HCT116 (cell line): ENCODE measurements at regions of chr9 and their contacts with region 1.

Region 1: GRCh38 chr9:3732077-3733038 is 206.6 kb upstream of the RFX3 start:
- DNase-seq: peak; percentile 73
- ATAC-seq: peak; percentile 99
- H3K4me3 ChIP-seq: no peak overlapping the region
- H3K27ac ChIP-seq: no peak overlapping the region
- H3K4me1 ChIP-seq: peaks cover 0 to 7% of the 10 kb centered on the region in 2 experiments; a peak in 2 of 4 replicates
- H3K27me3 ChIP-seq: no peaks in the 10 kb centered on the region
- CTCF ChIP-seq: peak; percentile 68 to 85 (median 78)
- POLR2A ChIP-seq: no peak
- RAD21 ChIP-seq: peak; percentile 92

Region 2: GRCh38 chr9:3549225-3549624 is 183.1 kb before region 1 on chr9:
- CTCF ChIA-PET with region 1: no interaction called
- POLR2A ChIA-PET with region 1: no interaction called
- RAD21 ChIA-PET with region 1: no interaction called
- intact Hi-C with region 1: no loop called
- DNase-seq: no peak
- ATAC-seq: no peak
- H3K4me3 ChIP-seq: no peak overlapping the region
- H3K27ac ChIP-seq: no peak overlapping the region
- H3K4me1 ChIP-seq: no peaks in the 10 kb centered on the region
- H3K27me3 ChIP-seq: no peaks in the 10 kb centered on the region
- CTCF ChIP-seq: no peak
- POLR2A ChIP-seq: no peak
- RAD21 ChIP-seq: no peak

Region 3: DNA sequence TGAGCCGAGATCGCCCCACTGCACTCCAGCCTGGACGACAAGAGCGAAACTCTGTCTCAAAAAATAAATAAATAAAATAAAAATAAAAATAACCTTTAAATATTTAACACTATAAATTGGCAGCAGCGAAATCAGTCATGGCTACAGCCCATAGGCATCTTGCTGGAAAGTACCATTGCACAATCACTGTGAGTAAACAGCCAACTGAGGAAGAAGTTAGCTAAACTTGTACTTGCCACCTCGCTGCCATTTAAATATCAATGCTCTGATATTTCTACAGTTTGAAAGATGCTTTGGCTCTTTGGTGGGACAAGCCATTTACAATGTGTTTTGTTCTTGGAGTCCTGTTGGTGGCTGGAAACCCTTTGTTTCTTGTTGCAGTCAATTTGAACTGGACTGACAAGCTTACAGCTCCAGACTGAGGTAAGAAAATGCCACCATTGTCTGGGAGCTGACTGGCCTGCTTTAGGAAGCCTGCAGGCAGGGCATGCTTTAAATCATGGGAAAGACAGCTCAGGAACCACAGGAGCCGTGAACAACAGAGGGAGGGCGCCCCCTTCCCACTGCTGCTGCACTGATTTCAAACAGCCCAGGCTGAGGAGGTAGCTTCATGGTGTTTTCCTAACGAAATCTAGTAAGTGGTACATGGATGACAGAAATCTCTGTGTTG is 116.2 kb after region 1 on chr9:
- CTCF ChIA-PET with region 1: interaction called, 5 read pairs
- POLR2A ChIA-PET with region 1: no interaction called
- RAD21 ChIA-PET with region 1: interaction called, 3 to 6 read pairs
- intact Hi-C with region 1: loop called (anchors 1 kb)
- DNase-seq: no peak
- ATAC-seq: peak; percentile 93
- H3K4me3 ChIP-seq: no peak overlapping the region
- H3K27ac ChIP-seq: no peak overlapping the region
- H3K4me1 ChIP-seq: peaks cover 0 to 10% of the 10 kb centered on the region in 2 experiments; a peak in 1 of 4 replicates
- H3K27me3 ChIP-seq: no peaks in the 10 kb centered on the region
- CTCF ChIP-seq: peak; percentile 35 to 45 (median 43); a peak in 4 of 6 replicates
- POLR2A ChIP-seq: no peak
- RAD21 ChIP-seq: peak; percentile 77

Region 4: DNA sequence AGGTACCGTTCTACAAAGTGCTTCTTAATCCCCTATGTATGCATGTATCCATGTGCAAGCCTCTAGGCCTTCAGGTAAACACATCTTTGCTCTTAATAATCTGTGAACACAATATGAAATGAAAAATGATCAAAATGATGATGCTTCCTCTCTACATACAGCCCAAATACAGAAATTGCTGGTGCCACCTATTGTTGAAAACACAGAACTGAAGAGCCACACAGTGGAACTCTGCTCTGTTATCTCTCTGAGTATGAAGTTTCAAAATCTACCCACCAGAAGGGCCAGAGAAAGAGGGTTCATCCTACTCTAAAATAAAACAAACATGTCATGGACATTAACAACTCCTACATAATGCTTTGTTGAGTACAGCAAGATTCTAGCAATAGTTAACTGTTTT is 496.2 kb after region 1 on chr9:
- CTCF ChIA-PET with region 1: interaction called, 11 read pairs
- POLR2A ChIA-PET with region 1: no interaction called
- RAD21 ChIA-PET with region 1: no interaction called
- intact Hi-C with region 1: loop called (anchors 2 kb)
- DNase-seq: no peak
- ATAC-seq: peak; percentile 77
- H3K4me3 ChIP-seq: no peak overlapping the region
- H3K27ac ChIP-seq: no peak overlapping the region
- H3K4me1 ChIP-seq: peaks cover 0 to 39% of the 10 kb centered on the region in 2 experiments; a peak in 2 of 4 replicates
- H3K27me3 ChIP-seq: no peaks in the 10 kb centered on the region
- CTCF ChIP-seq: peak; percentile 40 to 64 (median 50); a peak in 5 of 6 replicates
- POLR2A ChIP-seq: no peak
- RAD21 ChIP-seq: peak; percentile 62

Region 5: GRCh38 chr9:4339357-4339756 is 607.0 kb after region 1 on chr9:
- CTCF ChIA-PET with region 1: interaction called, 12 read pairs
- POLR2A ChIA-PET with region 1: no interaction called
- RAD21 ChIA-PET with region 1: no interaction called
- intact Hi-C with region 1: loop called (anchors 1 kb)
- DNase-seq: peak; percentile 81
- ATAC-seq: peak; percentile 92
- H3K4me3 ChIP-seq: peak overlapping the region in 1 of 2 experiments; percentile 12; a peak in 1 of 4 replicates
- H3K27ac ChIP-seq: 0 out of 2 replicates have a peak overlapping the region, but pooled peaks have one; percentile 25
- H3K4me1 ChIP-seq: peaks cover 0 to 14% of the 10 kb centered on the region in 2 experiments; a peak in 3 of 4 replicates
- H3K27me3 ChIP-seq: no peaks in the 10 kb centered on the region
- CTCF ChIP-seq: peak; percentile 83 to 99 (median 96)
- POLR2A ChIP-seq: no peak
- RAD21 ChIP-seq: peak; percentile 87

Region 6: DNA sequence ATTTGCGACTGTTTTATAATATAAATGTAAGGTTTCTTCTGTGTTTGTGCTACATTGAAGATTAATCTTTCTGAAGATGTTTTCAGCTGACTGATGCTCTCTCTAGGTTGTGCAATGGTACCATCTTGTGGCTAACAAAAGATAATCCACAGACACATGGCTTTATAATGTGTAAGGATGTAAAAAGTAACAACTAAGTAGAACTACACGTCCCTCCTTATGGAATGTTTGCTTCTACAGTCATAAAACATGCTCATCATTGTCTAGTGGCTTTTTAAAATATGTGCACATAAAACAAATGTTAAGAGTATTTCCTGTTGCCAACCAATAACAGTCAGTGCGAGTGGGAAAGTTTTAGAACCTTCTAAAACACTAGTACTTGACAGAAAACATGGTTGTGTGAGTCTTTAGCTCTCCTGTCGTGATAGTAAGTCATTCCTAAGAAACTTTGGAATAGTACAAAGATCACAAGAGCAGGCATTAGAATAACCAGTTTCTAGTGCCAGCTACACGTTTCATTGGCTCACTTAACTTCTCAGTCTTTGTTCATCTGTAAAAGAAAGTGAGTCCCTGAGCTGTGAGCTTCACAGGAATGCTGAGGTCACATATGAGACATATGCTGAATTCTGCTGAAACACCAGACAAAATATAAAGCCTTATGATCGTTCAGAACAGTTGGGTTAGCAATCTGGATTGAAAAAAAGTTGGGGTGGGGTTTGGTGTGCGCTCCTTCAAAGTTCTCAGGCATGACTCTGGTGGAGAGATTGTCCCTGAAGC is 643.3 kb after region 1 on chr9:
- CTCF ChIA-PET with region 1: no interaction called
- POLR2A ChIA-PET with region 1: no interaction called
- RAD21 ChIA-PET with region 1: no interaction called
- intact Hi-C with region 1: loop called (anchors 1 kb)
- DNase-seq: peak; percentile 26
- ATAC-seq: peak; percentile 70
- H3K4me3 ChIP-seq: no peak overlapping the region
- H3K27ac ChIP-seq: no peak overlapping the region
- H3K4me1 ChIP-seq: no peaks in the 10 kb centered on the region
- H3K27me3 ChIP-seq: no peaks in the 10 kb centered on the region
- CTCF ChIP-seq: peak; percentile 21 to 60 (median 55); a peak in 4 of 6 replicates
- POLR2A ChIP-seq: no peak
- RAD21 ChIP-seq: peak; percentile 83